Activated CD4-positive, alpha-beta memory T cell treated with anti-CD3 and anti-CD28 coated beads, Interleukin-2, amount 10 ng/mL, durations not matched to agents 7 days and 5 days (primary cell): ENCODE measurements at regions of chr6 and their contacts with region 1.

Region 1: GRCh38 chr6:391559-392440 is at the start of gene IRF4:
- DNase-seq: peak; percentile 76
- H3K4me3 Mint-ChIP-seq: peak within 1 kb of the TSS; percentile 98
- H3K27ac Mint-ChIP-seq: peak within 1 kb of the TSS; percentile 98
- H3K4me1 Mint-ChIP-seq: peaks cover 56% of the 10 kb centered on the region
- H3K27me3 Mint-ChIP-seq: no peaks in the 10 kb centered on the region
- total RNA-seq, gene IRF4: 171 to 178 TPM

Region 2: GRCh38 chr6:188821-189655 is 202.8 kb before region 1 on chr6:
- CTCF ChIA-PET with region 1: interaction called, 57 read pairs
- POLR2A ChIA-PET with region 1: interaction called, 159 read pairs
- DNase-seq: peak; percentile 91
- H3K4me3 Mint-ChIP-seq: peak overlapping the region; percentile 13
- H3K27ac Mint-ChIP-seq: peak overlapping the region; percentile 74
- H3K4me1 Mint-ChIP-seq: peaks cover 50% of the 10 kb centered on the region
- H3K27me3 Mint-ChIP-seq: no peaks in the 10 kb centered on the region

Region 3: DNA sequence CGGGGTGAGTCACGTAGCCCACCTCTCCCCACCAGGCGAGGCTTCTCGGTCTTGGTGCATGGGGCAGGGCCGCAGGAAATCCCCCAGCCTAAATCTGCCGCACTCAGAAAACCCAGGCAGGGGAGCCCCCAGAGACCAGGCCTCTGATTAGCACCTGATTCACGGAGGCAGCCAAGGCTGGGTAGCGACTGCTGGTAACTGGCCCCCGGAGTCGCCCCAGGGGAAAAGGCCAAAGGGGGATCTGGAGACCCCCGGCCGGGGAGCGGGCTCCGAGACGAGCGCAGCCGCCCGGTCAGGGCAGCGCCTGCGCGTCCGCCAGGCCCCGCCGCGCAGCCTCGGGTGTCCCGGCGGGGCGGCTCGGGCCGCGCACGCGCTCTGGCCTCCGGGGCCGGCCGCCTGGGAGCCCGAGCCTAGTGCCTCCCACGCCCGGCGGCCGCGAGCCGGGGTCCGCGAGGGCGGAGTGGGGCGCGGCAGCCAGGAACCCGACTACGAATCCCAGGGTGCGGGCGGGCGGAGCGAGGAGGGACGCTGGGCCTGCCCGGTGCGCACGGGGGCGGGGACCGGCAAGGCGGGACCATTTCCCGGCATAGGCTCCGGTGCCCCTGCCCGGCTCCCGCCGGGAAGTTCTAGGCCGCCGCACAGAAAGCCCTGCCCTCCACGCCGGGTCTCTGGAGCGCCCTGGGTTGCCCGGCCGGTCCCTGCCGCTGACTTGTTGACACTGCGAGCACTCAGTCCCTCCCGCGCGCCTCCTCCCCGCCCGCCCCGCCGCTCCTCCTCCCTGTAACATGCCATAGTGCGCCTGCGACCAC is 99.9 kb before region 1 on chr6 and contains the start of gene DUSP22:
- CTCF ChIA-PET with region 1: interaction called, 5 read pairs
- POLR2A ChIA-PET with region 1: interaction called, 57 read pairs
- DNase-seq: peak; percentile 85
- H3K4me3 Mint-ChIP-seq: peak within 1 kb of the TSS; percentile 84
- H3K27ac Mint-ChIP-seq: peak within 1 kb of the TSS; percentile 94
- H3K4me1 Mint-ChIP-seq: peaks cover 48% of the 10 kb centered on the region
- H3K27me3 Mint-ChIP-seq: peaks cover 4% of the 10 kb centered on the region
- total RNA-seq, gene DUSP22: 36.3 to 41.5 TPM

Region 4: DNA sequence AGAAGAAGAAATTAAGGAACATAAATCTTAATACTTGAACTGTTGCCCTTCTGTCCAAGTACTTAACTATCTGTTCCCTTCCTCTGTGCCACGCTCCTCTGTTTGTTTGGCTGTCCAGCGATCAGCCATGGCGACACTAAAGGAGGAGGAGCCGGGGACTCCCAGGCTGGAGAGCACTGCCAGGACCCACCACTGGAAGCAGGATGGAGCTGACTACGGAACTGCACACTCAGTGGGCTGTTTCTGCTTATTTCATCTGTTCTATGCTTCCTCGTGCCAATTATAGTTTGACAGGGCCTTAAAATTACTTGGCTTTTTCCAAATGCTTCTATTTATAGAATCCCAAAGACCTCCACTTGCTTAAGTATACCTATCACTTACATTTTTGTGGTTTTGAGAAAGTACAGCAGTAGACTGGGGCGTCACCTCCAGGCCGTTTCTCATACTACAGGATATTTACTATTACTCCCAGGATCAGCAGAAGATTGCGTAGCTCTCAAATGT is 16.9 kb after region 1 on chr6:
- CTCF ChIA-PET with region 1: interaction called, 45 read pairs
- POLR2A ChIA-PET with region 1: interaction called, 328 read pairs
- DNase-seq: no peak
- H3K4me3 Mint-ChIP-seq: no peak overlapping the region
- H3K27ac Mint-ChIP-seq: peak overlapping the region; percentile 36
- H3K4me1 Mint-ChIP-seq: peaks cover 66% of the 10 kb centered on the region
- H3K27me3 Mint-ChIP-seq: no peaks in the 10 kb centered on the region

Region 5: DNA sequence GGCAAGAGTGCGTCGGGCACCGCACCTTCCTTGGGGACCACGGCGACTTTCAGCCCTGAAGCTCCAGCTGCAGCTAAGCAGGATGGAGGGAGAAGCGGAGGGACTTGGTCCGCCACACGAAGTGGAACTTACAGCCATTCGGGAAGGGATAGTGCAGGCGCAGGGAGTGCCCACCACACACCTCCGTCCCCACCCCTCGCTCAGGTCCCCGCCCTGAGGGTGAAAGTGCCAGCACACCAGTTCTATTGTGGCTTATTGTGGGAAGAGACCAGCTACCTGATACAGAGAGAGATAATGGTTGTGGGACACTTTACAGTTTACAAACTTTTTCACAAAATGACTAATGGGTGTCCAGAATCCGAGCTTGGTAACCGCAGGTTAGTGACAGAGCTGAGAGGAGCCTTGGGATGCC is 75.9 kb after region 1 on chr6:
- CTCF ChIA-PET with region 1: interaction called, 3 read pairs
- POLR2A ChIA-PET with region 1: interaction called, 11 read pairs
- DNase-seq: peak; percentile 46
- H3K4me3 Mint-ChIP-seq: no peak overlapping the region
- H3K27ac Mint-ChIP-seq: no peak overlapping the region
- H3K4me1 Mint-ChIP-seq: peaks cover 43% of the 10 kb centered on the region
- H3K27me3 Mint-ChIP-seq: peaks cover 75% of the 10 kb centered on the region

Region 6: DNA sequence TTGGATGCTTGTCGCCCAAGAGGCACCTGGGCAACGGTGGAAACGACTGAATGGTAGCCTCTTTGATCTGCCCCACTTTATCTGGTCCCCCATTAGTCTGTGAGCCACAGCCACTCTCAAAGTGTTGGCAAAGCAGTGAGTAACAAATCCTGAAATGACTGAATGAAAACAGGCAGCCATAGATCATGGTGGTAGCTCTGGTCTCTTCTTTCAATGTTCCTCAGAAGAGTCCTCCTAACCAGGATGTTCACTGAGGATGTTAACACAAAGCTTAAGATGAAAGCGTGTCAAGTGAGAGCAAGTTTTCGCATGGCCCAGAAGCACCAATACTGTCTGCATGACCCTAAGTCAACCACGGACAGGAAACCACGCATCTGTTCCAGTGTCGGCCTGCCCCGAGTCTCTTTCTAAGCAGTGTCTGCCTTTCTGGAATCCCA is 107.0 kb after region 1 on chr6:
- CTCF ChIA-PET with region 1: interaction called, 3 read pairs
- POLR2A ChIA-PET with region 1: interaction called, 43 read pairs
- DNase-seq: peak; percentile 72
- H3K4me3 Mint-ChIP-seq: peak overlapping the region; percentile 65
- H3K27ac Mint-ChIP-seq: peak overlapping the region; percentile 88
- H3K4me1 Mint-ChIP-seq: peaks cover 80% of the 10 kb centered on the region
- H3K27me3 Mint-ChIP-seq: no peaks in the 10 kb centered on the region

Region 7: DNA sequence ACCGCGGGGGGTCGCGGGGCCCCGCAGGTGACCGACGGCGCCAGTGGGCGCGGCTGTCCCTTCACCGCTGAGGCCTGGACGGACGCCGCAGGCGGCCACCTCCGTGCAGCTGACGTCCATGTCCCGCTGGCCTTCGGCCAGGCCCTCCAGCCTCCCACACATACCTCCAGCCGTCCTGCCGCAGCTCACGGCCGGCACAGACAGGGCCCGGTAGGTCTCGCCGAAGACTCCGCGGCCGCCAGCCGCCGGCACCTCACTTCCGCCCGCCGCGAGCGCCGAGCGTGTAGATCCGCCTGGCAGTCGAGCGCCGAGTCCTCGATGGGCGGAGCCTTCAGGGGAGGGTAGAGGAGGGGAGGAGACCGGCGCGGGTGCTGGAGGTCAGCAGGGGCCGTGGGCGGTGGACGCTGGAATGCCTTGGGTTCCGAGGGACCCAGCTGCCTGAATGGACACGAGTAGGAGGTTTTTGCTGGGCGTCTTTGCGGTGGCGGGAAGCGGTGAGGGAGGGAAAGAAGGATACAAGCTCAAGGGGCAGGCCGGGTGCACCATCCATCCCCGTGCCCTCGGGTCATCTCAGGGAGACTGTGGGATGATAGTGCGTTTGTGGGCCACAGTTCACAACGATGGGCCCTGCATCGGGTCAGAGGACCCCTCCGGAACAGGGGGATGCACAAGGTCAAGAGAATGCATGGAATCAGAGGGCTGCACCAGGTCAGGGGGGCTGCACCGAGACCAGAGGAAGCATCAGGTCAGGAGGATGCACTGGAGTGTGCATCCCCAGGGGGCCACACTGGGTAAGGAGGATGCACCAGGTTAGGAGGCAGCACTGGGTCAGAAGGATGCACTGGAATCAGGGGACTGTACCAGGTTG is 301.3 kb after region 1 on chr6 and contains the start of gene EXOC2:
- CTCF ChIA-PET with region 1: no interaction called
- POLR2A ChIA-PET with region 1: interaction called, 20 read pairs
- DNase-seq: peak; percentile 90
- H3K4me3 Mint-ChIP-seq: peak within 1 kb of the TSS; percentile 92
- H3K27ac Mint-ChIP-seq: peak within 1 kb of the TSS; percentile 90
- H3K4me1 Mint-ChIP-seq: peaks cover 35% of the 10 kb centered on the region
- H3K27me3 Mint-ChIP-seq: no peaks in the 10 kb centered on the region
- total RNA-seq, gene EXOC2: 31.9 to 35.7 TPM

Region 8: DNA sequence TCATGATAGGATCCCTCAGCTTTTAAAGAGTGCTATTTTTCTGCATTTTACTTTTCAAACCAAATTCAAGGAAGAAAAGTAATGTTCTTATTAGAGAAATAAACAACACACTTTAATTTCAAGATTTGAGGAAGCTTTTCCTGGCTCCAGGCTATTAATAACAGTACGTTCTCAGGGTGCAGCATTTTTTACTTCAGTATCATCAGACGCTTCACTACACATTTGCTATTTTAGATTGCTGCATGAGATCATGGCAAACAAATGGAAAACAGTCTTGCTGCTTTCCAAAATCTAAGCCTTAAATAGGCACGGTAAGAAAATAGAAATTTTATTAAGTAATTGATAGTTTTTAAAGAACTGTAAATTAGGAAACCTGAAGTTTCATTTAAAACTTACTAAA is 554.7 kb after region 1 on chr6:
- CTCF ChIA-PET with region 1: no interaction called
- POLR2A ChIA-PET with region 1: no interaction called
- DNase-seq: no peak
- H3K4me3 Mint-ChIP-seq: no peak overlapping the region
- H3K27ac Mint-ChIP-seq: no peak overlapping the region
- H3K4me1 Mint-ChIP-seq: no peaks in the 10 kb centered on the region
- H3K27me3 Mint-ChIP-seq: peaks cover 11% of the 10 kb centered on the region